ENCODE measurements at regions of chr1 and their contacts with region 1.

Region 1: DNA sequence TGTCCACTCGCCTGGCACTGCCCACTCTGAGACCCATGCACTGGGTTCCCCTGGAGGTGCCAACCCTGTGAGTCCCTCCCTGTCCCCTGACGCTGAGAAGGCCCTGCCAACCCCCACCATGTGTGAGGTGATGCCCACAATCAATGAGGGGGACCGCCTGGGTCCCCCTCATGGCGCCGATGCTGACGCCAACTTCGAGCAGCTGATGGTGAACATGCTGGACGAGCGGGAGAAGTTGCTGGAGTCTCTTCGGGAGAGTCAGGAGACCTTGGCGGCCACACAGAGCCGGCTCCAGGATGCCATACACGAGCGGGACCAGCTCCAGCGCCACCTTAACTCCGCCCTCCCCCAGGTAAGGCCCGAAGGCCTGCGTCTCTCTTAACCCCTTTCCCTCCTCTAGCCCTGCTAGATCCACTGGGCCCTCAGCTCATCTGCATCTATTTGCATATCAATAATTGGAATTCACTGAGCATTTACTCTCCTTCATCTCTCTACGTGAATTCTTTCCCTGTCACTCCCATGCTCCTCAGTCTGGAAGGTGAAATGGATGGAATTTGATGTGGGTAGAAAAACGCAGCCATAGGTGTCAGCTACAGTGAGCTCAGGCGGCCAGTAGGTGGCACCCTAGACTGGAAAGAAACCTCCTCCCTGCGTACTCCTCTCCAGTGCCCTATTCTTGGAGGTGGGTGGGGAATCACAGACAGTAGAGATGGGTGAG is 12.8 kb downstream of the PPFIA4 start:
- DNase-seq: peak in 1 of 2 experiments; percentile 86
- H3K4me3 ChIP-seq: no peak overlapping the region
- H3K27ac ChIP-seq: no peak overlapping the region
- H3K4me1 ChIP-seq: peaks cover 2 to 15% (median 5%) of the 10 kb centered on the region in 4 experiments
- H3K27me3 ChIP-seq: no peaks in the 10 kb centered on the region
- CTCF ChIP-seq: peak; percentile 87 to 97 (median 88)
- EP300 ChIP-seq: no peak
- POLR2A ChIP-seq: no peak
- RAD21 ChIP-seq: peak; percentile 88 to 94

Region 2: GRCh38 chr1:203026031-203026989 is 12.7 kb before region 1 on chr1 and contains the start of gene PPFIA4:
- CTCF ChIA-PET with region 1: interaction called, 1,089 read pairs
- POLR2A ChIA-PET with region 1: interaction called, 22 read pairs
- DNase-seq: peak; percentile 73 to 97
- H3K4me3 ChIP-seq: peak within 1 kb of the TSS; percentile 51 to 88 (median 87)
- H3K27ac ChIP-seq: no peak within 1 kb of the TSS
- H3K4me1 ChIP-seq: peaks cover 4 to 13% (median 6%) of the 10 kb centered on the region in 4 experiments
- H3K27me3 ChIP-seq: peaks cover 7 to 26% (median 18%) of the 10 kb centered on the region in 4 experiments
- CTCF ChIP-seq: peak in 1 of 3 experiments; percentile 28; a peak in 1 of 4 replicates
- EP300 ChIP-seq: 0 out of 3 replicates have a peak, but pooled peaks of 1 of the 2 experiments have one; percentile 26
- POLR2A ChIP-seq: peak; percentile 74 to 79
- RAD21 ChIP-seq: peak in 1 of 2 experiments; percentile 11; a peak in 1 of 4 replicates
- total RNA-seq, gene PPFIA4: 7.0 and 9.9 TPM in 2 replicates

Region 3: GRCh38 chr1:203090421-203091387 is 51.7 kb after region 1 on chr1:
- CTCF ChIA-PET with region 1: interaction called, 139 read pairs
- POLR2A ChIA-PET with region 1: interaction called, 3 read pairs
- DNase-seq: peak in 1 of 2 experiments; percentile 40
- H3K4me3 ChIP-seq: no peak overlapping the region
- H3K27ac ChIP-seq: no peak overlapping the region
- H3K4me1 ChIP-seq: peaks cover 0 to 3% (median 0%) of the 10 kb centered on the region in 4 experiments; a peak in 1 of 7 replicates
- H3K27me3 ChIP-seq: 0 out of 7 replicates have a peak, but pooled peaks cover 0 to 2% (median 0%) of the 10 kb centered on the region in 4 experiments
- CTCF ChIP-seq: no peak
- EP300 ChIP-seq: no peak
- POLR2A ChIP-seq: no peak
- RAD21 ChIP-seq: no peak

Region 4: GRCh38 chr1:203166566-203166940 is 127.5 kb after region 1 on chr1:
- CTCF ChIA-PET with region 1: interaction called, 106 read pairs
- POLR2A ChIA-PET with region 1: no interaction called
- DNase-seq: no peak
- H3K4me3 ChIP-seq: no peak overlapping the region
- H3K27ac ChIP-seq: no peak overlapping the region
- H3K4me1 ChIP-seq: no peaks in the 10 kb centered on the region; a peak in 1 of 7 replicates
- H3K27me3 ChIP-seq: no peaks in the 10 kb centered on the region
- CTCF ChIP-seq: peak; percentile 15 to 32 (median 17); a peak in 2 of 4 replicates
- EP300 ChIP-seq: no peak
- POLR2A ChIP-seq: no peak
- RAD21 ChIP-seq: peak; percentile 5 to 23; a peak in 1 of 4 replicates

Region 5: GRCh38 chr1:203186446-203187303 is 147.6 kb after region 1 on chr1 and contains the start of gene CHI3L1:
- CTCF ChIA-PET with region 1: interaction called, 25 read pairs
- POLR2A ChIA-PET with region 1: no interaction called
- DNase-seq: no peak
- H3K4me3 ChIP-seq: no peak within 1 kb of the TSS
- H3K27ac ChIP-seq: no peak within 1 kb of the TSS
- H3K4me1 ChIP-seq: peaks cover 6 to 17% (median 11%) of the 10 kb centered on the region in 4 experiments
- H3K27me3 ChIP-seq: no peaks in the 10 kb centered on the region
- CTCF ChIP-seq: no peak
- EP300 ChIP-seq: no peak
- POLR2A ChIP-seq: no peak
- RAD21 ChIP-seq: no peak
- total RNA-seq, gene CHI3L1: not detected in 2 replicates

Region 6: GRCh38 chr1:203202431-203203245 is 163.6 kb after region 1 on chr1:
- CTCF ChIA-PET with region 1: interaction called, 41 read pairs
- POLR2A ChIA-PET with region 1: no interaction called
- DNase-seq: no peak
- H3K4me3 ChIP-seq: no peak overlapping the region
- H3K27ac ChIP-seq: no peak overlapping the region
- H3K4me1 ChIP-seq: peaks cover 0 to 7% (median 0%) of the 10 kb centered on the region in 4 experiments; a peak in 2 of 7 replicates
- H3K27me3 ChIP-seq: no peaks in the 10 kb centered on the region; a peak in 1 of 7 replicates
- CTCF ChIP-seq: no peak
- EP300 ChIP-seq: no peak
- POLR2A ChIP-seq: no peak
- RAD21 ChIP-seq: no peak

Region 7: GRCh38 chr1:203273206-203273868 is 234.3 kb after region 1 on chr1:
- CTCF ChIA-PET with region 1: interaction called, 204 read pairs
- POLR2A ChIA-PET with region 1: interaction called, 7 read pairs
- DNase-seq: peak; percentile 46 to 94
- H3K4me3 ChIP-seq: peak overlapping the region in 3 of 4 experiments; percentile 37 to 57 (median 52); a peak in 6 of 8 replicates
- H3K27ac ChIP-seq: no peak overlapping the region
- H3K4me1 ChIP-seq: peaks cover under 1 to 9% (median 7%) of the 10 kb centered on the region in 4 experiments; a peak in 6 of 7 replicates
- H3K27me3 ChIP-seq: peaks cover 0 to 31% (median 10%) of the 10 kb centered on the region in 4 experiments; a peak in 5 of 7 replicates
- CTCF ChIP-seq: peak; percentile 91 to 94 (median 92)
- EP300 ChIP-seq: no peak
- POLR2A ChIP-seq: no peak
- RAD21 ChIP-seq: peak; percentile 87 to 88

Measured in H1 (cell line).